ENCODE measurements at regions of chr5 and their contacts with region 1.

Region 1: GRCh38 chr5:181223058-181223728 is at the start of gene TRIM41:
- DNase-seq: peak; percentile 98
- ATAC-seq: peak; percentile 64
- H3K4me3 Mint-ChIP-seq: peak within 1 kb of the TSS; percentile 87
- H3K27ac Mint-ChIP-seq: peak within 1 kb of the TSS; percentile 95
- H3K4me1 Mint-ChIP-seq: peaks cover 56% of the 10 kb centered on the region
- H3K27me3 Mint-ChIP-seq: no peaks in the 10 kb centered on the region
- total RNA-seq, gene TRIM41: 27.0 to 30.7 TPM

Region 2: GRCh38 chr5:180810210-180810958 is 412.8 kb before region 1 on chr5:
- CTCF ChIA-PET with region 1: interaction called, 3 read pairs
- POLR2A ChIA-PET with region 1: no interaction called
- intact Hi-C with region 1: loop called in 1 of 2 experiments (anchors 1 kb)
- DNase-seq: peak; percentile 98
- ATAC-seq: peak; percentile 79
- H3K4me3 Mint-ChIP-seq: peak overlapping the region; percentile 91
- H3K27ac Mint-ChIP-seq: peak overlapping the region; percentile 97
- H3K4me1 Mint-ChIP-seq: peaks cover 72% of the 10 kb centered on the region
- H3K27me3 Mint-ChIP-seq: no peaks in the 10 kb centered on the region

Region 3: DNA sequence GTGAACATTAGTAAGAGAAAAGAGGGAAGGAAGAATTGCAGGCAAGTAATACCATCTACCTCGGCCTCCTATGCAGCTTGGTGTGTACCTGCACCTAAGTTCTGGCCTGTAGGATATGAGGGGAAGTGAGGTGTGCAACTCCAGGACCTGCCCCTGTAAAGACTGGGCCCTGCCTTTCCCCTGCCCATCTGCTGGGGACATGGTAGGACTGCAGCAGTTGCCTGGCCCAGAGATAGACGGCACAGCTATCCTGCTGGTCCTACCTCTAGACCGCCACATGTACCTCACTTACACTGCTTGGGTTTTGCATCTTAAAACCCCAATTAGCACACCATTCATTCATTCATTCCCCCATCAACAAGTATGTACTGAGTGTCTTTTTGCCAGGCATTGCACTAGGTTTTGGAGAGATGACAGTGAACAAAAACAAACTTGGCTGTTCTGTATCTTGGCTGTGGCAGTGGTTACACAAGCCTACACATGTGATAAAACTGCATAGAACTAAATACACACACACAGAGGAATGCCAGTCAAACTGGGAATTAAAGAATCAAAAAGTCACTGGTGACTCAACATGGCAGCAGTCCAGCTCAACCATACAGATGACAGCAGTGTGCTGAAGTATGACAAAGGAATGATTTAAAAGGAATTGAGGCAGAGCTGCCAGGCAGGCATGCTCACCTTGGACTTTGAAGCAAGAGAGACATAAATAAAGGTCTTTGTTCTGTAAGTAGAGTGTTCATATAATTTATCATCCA is 397.2 kb before region 1 on chr5:
- CTCF ChIA-PET with region 1: no interaction called
- POLR2A ChIA-PET with region 1: interaction called, 10 read pairs
- intact Hi-C with region 1: no loop called
- DNase-seq: peak; percentile 82
- ATAC-seq: peak; percentile 77
- H3K4me3 Mint-ChIP-seq: no peak overlapping the region
- H3K27ac Mint-ChIP-seq: peak overlapping the region; percentile 51
- H3K4me1 Mint-ChIP-seq: peaks cover 56% of the 10 kb centered on the region
- H3K27me3 Mint-ChIP-seq: no peaks in the 10 kb centered on the region

Region 4: GRCh38 chr5:181181650-181182565 is 41.3 kb before region 1 on chr5:
- CTCF ChIA-PET with region 1: interaction called, 10 read pairs
- POLR2A ChIA-PET with region 1: no interaction called
- intact Hi-C with region 1: no loop called
- DNase-seq: peak; percentile 78
- ATAC-seq: peak; percentile 63
- H3K4me3 Mint-ChIP-seq: no peak overlapping the region
- H3K27ac Mint-ChIP-seq: no peak overlapping the region
- H3K4me1 Mint-ChIP-seq: peaks cover 25% of the 10 kb centered on the region
- H3K27me3 Mint-ChIP-seq: no peaks in the 10 kb centered on the region

Region 5: GRCh38 chr5:181207214-181208107 is 15.7 kb before region 1 on chr5:
- CTCF ChIA-PET with region 1: interaction called, 7 read pairs
- POLR2A ChIA-PET with region 1: interaction called, 6 read pairs
- intact Hi-C with region 1: loop called (anchors 1 kb)
- DNase-seq: peak; percentile 93
- ATAC-seq: peak; percentile 51
- H3K4me3 Mint-ChIP-seq: peak overlapping the region; percentile 87
- H3K27ac Mint-ChIP-seq: peak overlapping the region; percentile 93
- H3K4me1 Mint-ChIP-seq: peaks cover 32% of the 10 kb centered on the region
- H3K27me3 Mint-ChIP-seq: peaks cover 20% of the 10 kb centered on the region

Region 6: GRCh38 chr5:181243512-181244343 is 20.5 kb after region 1 on chr5 and contains the start of gene RACK1:
- CTCF ChIA-PET with region 1: interaction called, 5 read pairs
- POLR2A ChIA-PET with region 1: interaction called, 12 read pairs
- intact Hi-C with region 1: loop called (anchors 1 kb)
- DNase-seq: peak; percentile 94
- ATAC-seq: peak; percentile 70
- H3K4me3 Mint-ChIP-seq: peak within 1 kb of the TSS; percentile 91
- H3K27ac Mint-ChIP-seq: peak within 1 kb of the TSS; percentile 99
- H3K4me1 Mint-ChIP-seq: peaks cover 50% of the 10 kb centered on the region
- H3K27me3 Mint-ChIP-seq: no peaks in the 10 kb centered on the region
- total RNA-seq, gene RACK1: 2,724 to 3,901 TPM

Region 7: GRCh38 chr5:181260387-181261319 is 37.5 kb after region 1 on chr5 and contains the start of gene TRIM52:
- CTCF ChIA-PET with region 1: interaction called, 6 read pairs
- POLR2A ChIA-PET with region 1: interaction called, 13 read pairs
- intact Hi-C with region 1: loop called (anchors 1 kb)
- DNase-seq: peak; percentile 95
- ATAC-seq: peak; percentile 85
- H3K4me3 Mint-ChIP-seq: peak within 1 kb of the TSS; percentile 91
- H3K27ac Mint-ChIP-seq: peak within 1 kb of the TSS; percentile 95
- H3K4me1 Mint-ChIP-seq: peaks cover 38% of the 10 kb centered on the region
- H3K27me3 Mint-ChIP-seq: no peaks in the 10 kb centered on the region
- total RNA-seq, gene TRIM52: 10.4 to 13.1 TPM